MCF 10A (cell line): ENCODE measurements at regions of chr1 and their contacts with region 1.

Region 1: GRCh38 chr1:182175361-182175931 is 113.9 kb upstream of the ZNF648 start:
- DNase-seq: peak; percentile 84
- H3K4me3 Mint-ChIP-seq: no peak overlapping the region
- H3K27ac Mint-ChIP-seq: peak overlapping the region; percentile 74
- H3K4me1 Mint-ChIP-seq: peaks cover 40% of the 10 kb centered on the region
- H3K27me3 Mint-ChIP-seq: no peaks in the 10 kb centered on the region
- CTCF ChIP-seq: no peak

Region 2: DNA sequence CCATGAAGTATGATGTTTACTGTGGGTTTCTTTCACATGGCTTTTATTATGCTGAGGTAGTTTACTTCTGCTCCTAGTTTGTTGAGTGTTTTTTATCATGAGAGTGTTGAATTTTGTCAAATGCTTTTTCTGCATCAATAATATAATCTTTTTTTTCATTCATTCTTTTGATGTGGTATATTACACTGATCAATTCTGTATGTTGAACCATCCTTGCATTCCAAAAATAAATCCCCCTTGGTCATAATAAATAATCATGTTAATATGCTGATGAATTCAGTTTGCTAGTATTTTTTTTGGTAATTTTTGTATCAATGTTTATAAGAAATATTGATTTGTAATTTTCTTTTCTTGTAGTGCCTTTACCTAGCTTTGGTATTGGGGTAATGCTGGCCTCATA is 16.0 kb before region 1 on chr1:
- CTCF ChIA-PET with region 1: no interaction called
- POLR2A ChIA-PET with region 1: interaction called, 17 read pairs
- intact Hi-C with region 1: no loop called
- DNase-seq: no peak
- H3K4me3 Mint-ChIP-seq: no peak overlapping the region
- H3K27ac Mint-ChIP-seq: no peak overlapping the region
- H3K4me1 Mint-ChIP-seq: no peaks in the 10 kb centered on the region
- H3K27me3 Mint-ChIP-seq: no peaks in the 10 kb centered on the region
- CTCF ChIP-seq: no peak

Region 3: DNA sequence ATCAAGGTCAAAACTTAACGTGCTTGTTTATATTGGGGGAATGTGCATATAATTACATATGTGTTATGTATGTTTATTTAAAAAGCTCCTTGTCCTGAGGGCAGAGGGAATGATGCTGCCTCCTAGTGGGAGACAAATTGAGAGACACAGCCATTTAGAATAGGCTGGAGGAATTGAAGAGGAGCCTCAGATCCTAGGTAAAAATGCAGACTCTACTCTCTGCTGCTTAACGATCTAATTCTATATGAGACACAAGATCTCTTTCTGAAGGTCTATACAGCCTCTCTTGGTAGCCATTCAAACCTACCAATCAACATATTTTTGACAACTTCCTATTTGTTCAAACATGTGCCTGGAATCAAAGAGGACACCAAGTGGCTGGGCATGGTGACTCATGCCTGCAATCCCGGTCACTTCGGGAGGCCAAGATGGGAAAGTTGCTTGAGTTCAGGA is 22.6 kb after region 1 on chr1:
- CTCF ChIA-PET with region 1: interaction called, 9 read pairs
- POLR2A ChIA-PET with region 1: interaction called, 131 read pairs
- intact Hi-C with region 1: no loop called
- DNase-seq: peak; percentile 62
- H3K4me3 Mint-ChIP-seq: peak overlapping the region; percentile 15
- H3K27ac Mint-ChIP-seq: peak overlapping the region; percentile 94
- H3K4me1 Mint-ChIP-seq: peaks cover 56% of the 10 kb centered on the region
- H3K27me3 Mint-ChIP-seq: no peaks in the 10 kb centered on the region
- CTCF ChIP-seq: peak; percentile 20

Region 4: DNA sequence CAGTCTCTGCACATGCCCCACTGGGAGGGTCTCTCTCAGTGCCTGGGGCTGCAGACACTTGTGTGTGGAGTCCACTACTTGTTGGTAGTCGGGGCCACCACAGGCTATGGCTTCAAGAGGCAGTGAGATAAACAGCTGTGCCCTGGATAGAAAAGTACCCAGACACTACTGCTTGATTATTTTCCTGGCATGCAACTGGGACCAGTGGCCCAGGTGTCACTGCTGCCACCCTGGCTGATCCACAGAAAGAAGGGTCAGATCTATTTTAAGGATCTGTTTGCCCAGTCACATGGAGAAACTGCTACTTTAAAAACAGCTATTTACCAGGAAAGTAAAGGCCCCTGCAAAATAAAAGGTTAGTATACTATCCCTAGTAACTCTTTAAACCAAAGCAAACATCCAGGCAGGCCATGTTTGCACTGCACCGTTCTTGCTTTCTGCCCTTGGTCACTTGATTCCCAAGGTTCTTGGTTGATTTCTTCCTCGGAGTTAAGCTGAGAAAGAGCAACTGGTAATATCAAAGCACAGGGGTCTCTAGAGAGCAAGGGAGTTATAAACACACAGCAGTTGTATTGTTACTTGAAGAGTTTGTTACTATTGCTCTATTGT is 116.2 kb after region 1 on chr1:
- CTCF ChIA-PET with region 1: no interaction called
- POLR2A ChIA-PET with region 1: interaction called, 44 read pairs
- intact Hi-C with region 1: no loop called
- DNase-seq: no peak
- H3K4me3 Mint-ChIP-seq: no peak overlapping the region
- H3K27ac Mint-ChIP-seq: peak overlapping the region; percentile 36
- H3K4me1 Mint-ChIP-seq: peaks cover 31% of the 10 kb centered on the region
- H3K27me3 Mint-ChIP-seq: no peaks in the 10 kb centered on the region
- CTCF ChIP-seq: no peak

Region 5: GRCh38 chr1:182381962-182382819 is 206.7 kb after region 1 on chr1:
- CTCF ChIA-PET with region 1: interaction called, 3 read pairs
- POLR2A ChIA-PET with region 1: interaction called, 30 read pairs
- intact Hi-C with region 1: no loop called
- DNase-seq: no peak
- H3K4me3 Mint-ChIP-seq: no peak overlapping the region
- H3K27ac Mint-ChIP-seq: peak overlapping the region; percentile 78
- H3K4me1 Mint-ChIP-seq: peaks cover 39% of the 10 kb centered on the region
- H3K27me3 Mint-ChIP-seq: no peaks in the 10 kb centered on the region
- CTCF ChIP-seq: no peak